ENCODE measurements at regions of chr9 and their contacts with region 1.

Region 1: GRCh38 chr9:87336914-87337333 is 160.7 kb upstream of the DAPK1 start:
- DNase-seq: peak in 25 of 42 donors; percentile 13 to 72 (median 36)

Region 2: GRCh38 chr9:86948074-86948929 is 388.6 kb before region 1 on chr9:
- intact Hi-C with region 1: no loop called
- DNase-seq: peak; percentile 77 to 95 (median 90)

Region 3: DNA sequence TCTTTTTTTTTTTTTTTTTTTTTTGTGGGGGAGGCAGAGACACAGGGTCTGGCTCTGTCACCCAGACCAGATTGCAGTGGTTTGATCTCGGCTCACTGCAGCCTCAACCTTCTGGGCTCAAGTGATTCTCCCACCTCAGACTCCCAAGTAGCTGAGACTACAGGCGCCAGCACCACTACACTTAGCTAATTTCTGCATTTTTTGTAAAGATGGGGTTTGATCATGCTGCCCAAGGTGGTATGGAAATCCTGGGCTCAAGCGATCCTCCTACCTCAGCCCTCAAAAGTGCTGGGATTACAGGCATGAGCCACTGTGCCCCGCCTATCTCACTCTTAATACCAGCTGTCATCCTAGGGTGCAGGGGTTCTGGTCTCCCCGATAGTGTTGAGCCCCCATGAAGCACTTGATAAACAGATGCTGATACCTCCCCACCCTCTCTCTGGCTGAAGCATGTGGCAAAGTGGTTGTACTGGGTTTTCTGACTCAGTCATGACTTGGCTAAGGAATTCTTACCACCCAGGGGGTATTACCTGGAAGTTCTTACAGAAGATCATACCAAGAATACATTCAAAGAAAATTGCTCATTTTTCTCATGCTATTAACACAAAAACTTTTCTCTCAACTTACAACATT is 50.5 kb after region 1 on chr9:
- intact Hi-C with region 1: no loop called
- DNase-seq: no peak

Region 4: GRCh38 chr9:87662808-87663528 is 326.0 kb after region 1 on chr9:
- intact Hi-C with region 1: loop called (anchors 5 kb)
- DNase-seq: peak; percentile 43 to 90 (median 78)

Measured in head of caudate nucleus (tissue), 42 donors.